CD4-positive, alpha-beta memory T cell (primary cell): ENCODE measurements at regions of chr20 and their contacts with region 1.

Region 1: GRCh38 chr20:10434832-10435812 is at the start of gene SLX4IP:
- DNase-seq: peak; percentile 83 to 87 (median 85)
- H3K4me3 ChIP-seq: peak within 1 kb of the TSS; percentile 85 to 87
- H3K4me3 Mint-ChIP-seq: peak within 1 kb of the TSS; percentile 88 to 97 (median 95)
- H3K27ac ChIP-seq: peak within 1 kb of the TSS; percentile 84
- H3K27ac Mint-ChIP-seq: peak within 1 kb of the TSS; percentile 94 to 99 (median 97)
- H3K4me1 ChIP-seq: peaks cover 54% of the 10 kb centered on the region
- H3K4me1 Mint-ChIP-seq: peaks cover 32 to 69% (median 51%) of the 10 kb centered on the region in 4 donors
- H3K27me3 ChIP-seq: no peaks in the 10 kb centered on the region
- H3K27me3 Mint-ChIP-seq: no peaks in the 10 kb centered on the region
- total RNA-seq, gene SLX4IP: 6.3 to 6.6 TPM

Region 2: DNA sequence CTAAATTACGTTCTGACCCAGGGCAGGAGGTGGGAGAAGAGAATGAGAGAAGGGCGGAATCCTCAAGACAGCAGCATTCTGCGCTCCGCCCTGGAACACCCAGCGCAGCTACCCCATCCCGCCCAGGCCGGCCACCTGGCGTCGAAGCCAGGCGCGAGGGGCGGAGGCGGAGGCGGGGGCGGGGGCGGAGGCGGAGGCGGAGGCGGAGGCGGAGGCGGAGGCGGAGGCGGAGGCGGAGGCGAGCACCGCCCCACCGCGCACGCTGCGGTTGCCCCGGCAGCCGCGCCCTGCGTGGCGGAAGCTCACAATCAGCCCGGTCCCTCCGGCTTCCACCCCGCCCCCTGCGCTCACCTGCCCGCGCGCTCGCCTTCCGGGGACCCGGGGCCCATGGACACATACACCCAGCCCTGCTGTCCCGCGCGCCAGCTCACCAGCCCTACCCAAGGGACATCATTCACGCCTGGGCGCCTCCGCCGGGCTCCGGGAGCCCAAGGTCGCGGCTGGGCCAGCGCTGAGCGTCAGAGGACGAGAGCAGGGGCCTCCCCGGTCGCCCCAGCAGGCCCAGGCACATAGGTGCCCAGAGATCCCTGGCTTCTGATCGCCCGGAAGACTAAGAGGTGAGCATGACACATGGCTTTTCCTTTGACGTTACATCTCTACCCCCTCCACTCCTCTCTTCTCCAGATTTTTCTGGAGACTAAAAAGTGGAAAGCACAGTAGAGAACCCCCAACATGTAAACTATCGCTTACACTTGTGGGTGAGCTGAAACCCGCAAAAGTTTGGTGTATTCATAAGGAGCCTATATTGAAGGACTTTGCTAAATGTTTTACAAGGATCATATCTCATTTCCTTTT is 400.2 kb before region 1 on chr20 and contains the start of gene ANKEF1:
- CTCF ChIA-PET with region 1: interaction called, 3 read pairs
- POLR2A ChIA-PET with region 1: interaction called, 22 read pairs
- intact Hi-C with region 1: loop called (anchors 1 kb)
- DNase-seq: peak; percentile 79 to 88 (median 86)
- H3K4me3 ChIP-seq: peak within 1 kb of the TSS; percentile 44 to 70
- H3K4me3 Mint-ChIP-seq: peak within 1 kb of the TSS; percentile 67 to 85 (median 78)
- H3K27ac ChIP-seq: peak within 1 kb of the TSS; percentile 40
- H3K27ac Mint-ChIP-seq: peak within 1 kb of the TSS; percentile 75 to 92 (median 85)
- H3K4me1 ChIP-seq: peaks cover 9% of the 10 kb centered on the region
- H3K4me1 Mint-ChIP-seq: peaks cover 11 to 23% (median 12%) of the 10 kb centered on the region in 4 donors
- H3K27me3 ChIP-seq: no peaks in the 10 kb centered on the region
- H3K27me3 Mint-ChIP-seq: peaks cover 2 to 10% of the 10 kb centered on the region in 2 donors
- total RNA-seq, gene ANKEF1: 5.0 to 5.1 TPM

Region 3: GRCh38 chr20:10350188-10350842 is 84.8 kb before region 1 on chr20:
- CTCF ChIA-PET with region 1: interaction called, 3 read pairs
- POLR2A ChIA-PET with region 1: interaction called, 4 read pairs
- intact Hi-C with region 1: loop called (anchors 2 kb)
- DNase-seq: no peak
- H3K4me3 ChIP-seq: no peak overlapping the region
- H3K4me3 Mint-ChIP-seq: peak overlapping the region; percentile 41 to 82 (median 74)
- H3K27ac ChIP-seq: no peak overlapping the region
- H3K27ac Mint-ChIP-seq: peak overlapping the region; percentile 49 to 93 (median 88)
- H3K4me1 ChIP-seq: peaks cover 27% of the 10 kb centered on the region
- H3K4me1 Mint-ChIP-seq: peaks cover 12 to 30% (median 25%) of the 10 kb centered on the region in 4 donors
- H3K27me3 ChIP-seq: no peaks in the 10 kb centered on the region
- H3K27me3 Mint-ChIP-seq: no peaks in the 10 kb centered on the region

Region 4: GRCh38 chr20:10447027-10447426 is 11.9 kb after region 1 on chr20:
- CTCF ChIA-PET with region 1: no interaction called
- POLR2A ChIA-PET with region 1: interaction called, 14 read pairs
- intact Hi-C with region 1: loop called (anchors 1 kb)
- DNase-seq: peak; percentile 26 to 74 (median 37)
- H3K4me3 ChIP-seq: no peak overlapping the region
- H3K4me3 Mint-ChIP-seq: peak overlapping the region; percentile 47 to 89 (median 76)
- H3K27ac ChIP-seq: no peak overlapping the region
- H3K27ac Mint-ChIP-seq: peak overlapping the region; percentile 9 to 88 (median 28)
- H3K4me1 ChIP-seq: peaks cover 16% of the 10 kb centered on the region
- H3K4me1 Mint-ChIP-seq: peaks cover 15 to 24% (median 17%) of the 10 kb centered on the region in 4 donors
- H3K27me3 ChIP-seq: no peaks in the 10 kb centered on the region
- H3K27me3 Mint-ChIP-seq: no peaks in the 10 kb centered on the region

Region 5: GRCh38 chr20:10453241-10453640 is 18.1 kb after region 1 on chr20:
- CTCF ChIA-PET with region 1: interaction called, 4 read pairs
- POLR2A ChIA-PET with region 1: interaction called, 14 read pairs
- intact Hi-C with region 1: no loop called
- DNase-seq: peak; percentile 10 to 43 (median 18)
- H3K4me3 ChIP-seq: no peak overlapping the region
- H3K4me3 Mint-ChIP-seq: peak overlapping the region; percentile 28 to 78 (median 66)
- H3K27ac ChIP-seq: peak overlapping the region; percentile 34
- H3K27ac Mint-ChIP-seq: peak overlapping the region; percentile 66 to 95 (median 92)
- H3K4me1 ChIP-seq: peaks cover 18% of the 10 kb centered on the region
- H3K4me1 Mint-ChIP-seq: peaks cover 16 to 22% (median 18%) of the 10 kb centered on the region in 4 donors
- H3K27me3 ChIP-seq: no peaks in the 10 kb centered on the region
- H3K27me3 Mint-ChIP-seq: no peaks in the 10 kb centered on the region

Region 6: DNA sequence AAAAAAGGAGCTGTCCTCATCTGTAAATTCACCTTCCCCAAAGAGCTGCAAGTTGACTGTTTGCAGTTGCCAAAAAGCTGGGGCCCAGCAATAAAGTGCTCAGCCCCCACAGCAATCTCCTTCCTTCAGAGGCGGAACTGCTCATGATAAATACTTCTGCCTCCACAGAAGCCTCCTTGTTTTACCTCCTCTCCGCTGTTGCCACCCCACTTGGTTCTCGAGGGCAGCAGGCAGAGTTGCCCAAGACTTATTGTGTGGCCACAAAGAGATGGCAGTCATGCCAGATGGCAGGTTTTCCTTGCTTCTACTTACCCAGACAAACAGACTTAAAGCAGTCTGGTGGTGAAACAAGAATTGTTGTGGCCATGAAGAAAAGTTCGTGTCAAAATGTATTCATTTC is 66.3 kb after region 1 on chr20:
- CTCF ChIA-PET with region 1: interaction called, 3 read pairs
- POLR2A ChIA-PET with region 1: interaction called, 9 read pairs
- intact Hi-C with region 1: loop called (anchors 5 kb)
- DNase-seq: peak in 3 of 5 donors; percentile 10 to 21 (median 11)
- H3K4me3 ChIP-seq: peak overlapping the region; percentile 30 to 36
- H3K4me3 Mint-ChIP-seq: peak overlapping the region; percentile 78 to 91 (median 87)
- H3K27ac ChIP-seq: no peak overlapping the region
- H3K27ac Mint-ChIP-seq: peak overlapping the region; percentile 62 to 95 (median 86)
- H3K4me1 ChIP-seq: peaks cover 14% of the 10 kb centered on the region
- H3K4me1 Mint-ChIP-seq: peaks cover 20 to 39% (median 23%) of the 10 kb centered on the region in 4 donors
- H3K27me3 ChIP-seq: no peaks in the 10 kb centered on the region
- H3K27me3 Mint-ChIP-seq: no peaks in the 10 kb centered on the region

Region 7: GRCh38 chr20:10511509-10512251 is 76.6 kb after region 1 on chr20:
- CTCF ChIA-PET with region 1: interaction called, 5 read pairs
- POLR2A ChIA-PET with region 1: interaction called, 14 read pairs
- intact Hi-C with region 1: loop called (anchors 1 kb)
- DNase-seq: peak; percentile 15 to 60 (median 40)
- H3K4me3 ChIP-seq: no peak overlapping the region
- H3K4me3 Mint-ChIP-seq: peak overlapping the region in 7 of 8 donors; percentile 13 to 72 (median 37)
- H3K27ac ChIP-seq: no peak overlapping the region
- H3K27ac Mint-ChIP-seq: peak overlapping the region in 5 of 7 donors; percentile 12 to 77 (median 60)
- H3K4me1 ChIP-seq: peaks cover 15% of the 10 kb centered on the region
- H3K4me1 Mint-ChIP-seq: peaks cover 13 to 22% (median 17%) of the 10 kb centered on the region in 4 donors
- H3K27me3 ChIP-seq: no peaks in the 10 kb centered on the region
- H3K27me3 Mint-ChIP-seq: no peaks in the 10 kb centered on the region